PC-9 (cell line): ENCODE measurements at regions of chr5 and their contacts with region 1.

Region 1: GRCh38 chr5:138918686-138919085 is 43.6 kb upstream of the LRRTM2 start:
- DNase-seq: no peak
- H3K4me3 ChIP-seq: no peak overlapping the region
- H3K27ac ChIP-seq: no peak overlapping the region
- H3K4me1 ChIP-seq: peaks cover 6% of the 10 kb centered on the region; the same call in 1 of the 2 replicates
- H3K27me3 ChIP-seq: no peaks in the 10 kb centered on the region
- CTCF ChIP-seq: no peak

Region 2: DNA sequence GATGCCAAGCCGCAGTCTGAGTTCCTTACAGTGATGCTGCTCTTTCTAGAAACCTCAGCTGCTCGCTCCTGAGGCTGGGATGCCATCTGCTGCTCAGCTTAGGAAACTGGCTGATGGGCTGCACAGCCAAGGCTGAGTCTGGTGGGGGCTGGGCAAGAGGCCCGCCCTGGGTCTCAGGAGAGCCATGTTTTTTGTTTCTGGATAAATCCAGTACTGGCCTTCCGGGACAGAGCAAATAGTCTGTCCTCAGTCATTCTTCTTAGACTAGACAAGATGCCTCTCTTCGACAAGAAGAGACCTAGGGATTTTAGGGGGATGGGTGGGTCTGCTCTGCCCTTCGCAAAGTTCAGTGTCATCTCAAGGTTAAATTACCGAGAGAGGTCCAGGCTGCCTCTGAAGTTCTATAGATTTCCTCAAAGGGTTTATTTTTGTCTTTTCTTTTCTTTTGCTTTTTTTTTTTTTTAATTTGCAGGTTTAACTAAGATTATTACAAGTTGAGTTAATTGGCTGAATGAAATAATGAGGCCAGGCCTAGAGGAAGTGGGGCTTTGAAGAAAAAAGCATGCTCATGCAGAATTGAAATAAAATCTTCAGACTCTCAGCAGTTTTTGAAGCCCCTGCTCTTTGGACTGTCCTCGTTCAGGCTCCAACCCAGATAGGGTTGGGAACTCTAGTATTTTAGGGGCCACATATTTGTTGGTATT is 344.2 kb after region 1 on chr5:
- CTCF ChIA-PET with region 1: no interaction called
- POLR2A ChIA-PET with region 1: no interaction called
- intact Hi-C with region 1: loop called (anchors 5 kb)
- DNase-seq: peak; percentile 73 to 80
- H3K4me3 ChIP-seq: no peak overlapping the region
- H3K27ac ChIP-seq: no peak overlapping the region
- H3K4me1 ChIP-seq: no peaks in the 10 kb centered on the region
- H3K27me3 ChIP-seq: peaks cover 6% of the 10 kb centered on the region; the same call in 1 of the 2 replicates
- CTCF ChIP-seq: peak; percentile 83